ENCODE measurements at regions of chr13 and their contacts with region 1.

Region 1: DNA sequence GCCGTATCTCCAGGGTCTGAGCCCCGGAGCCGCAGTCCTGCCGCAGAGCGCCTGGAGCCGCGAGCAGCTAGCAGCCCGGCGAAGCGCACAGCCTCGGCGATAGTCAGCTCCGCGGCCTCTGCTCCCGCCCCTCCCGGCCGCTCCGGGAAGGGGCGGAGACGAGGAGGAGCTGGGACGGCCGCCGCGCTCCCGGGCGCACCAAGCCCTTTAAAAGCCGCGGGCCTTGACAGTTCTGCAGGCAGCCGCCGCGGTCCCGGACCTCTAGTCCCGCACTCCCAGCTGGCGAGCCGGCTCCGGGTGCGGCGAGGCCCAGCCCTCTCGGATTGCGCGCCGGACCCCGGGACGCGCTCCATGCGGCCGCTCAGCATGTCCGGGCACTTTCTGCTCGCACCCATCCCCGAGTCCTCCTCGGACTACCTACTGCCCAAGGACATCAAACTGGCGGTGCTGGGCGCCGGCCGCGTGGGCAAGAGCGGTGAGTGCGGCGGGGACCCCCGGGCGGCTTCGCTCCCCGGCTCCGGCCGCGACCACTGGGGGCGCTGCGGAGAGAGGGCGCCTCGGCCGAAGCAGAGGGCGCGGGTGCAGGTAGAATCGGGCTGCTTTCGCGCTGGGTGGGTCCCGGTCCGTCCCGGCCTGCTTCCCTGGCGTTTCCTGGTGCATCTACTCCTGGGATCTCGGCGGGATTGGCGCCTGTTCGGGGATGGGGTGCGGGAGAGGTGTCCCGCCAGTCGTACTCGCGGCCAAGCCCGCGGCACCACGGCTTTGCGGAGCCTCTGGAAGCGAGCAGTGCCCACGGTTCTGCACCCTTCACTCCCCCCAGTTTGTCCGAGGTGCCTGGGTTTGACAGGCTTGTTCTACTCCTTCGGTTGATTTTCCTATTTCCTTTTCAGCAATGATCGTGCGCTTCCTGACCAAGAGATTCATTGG is at the start of gene RASL11A:
- DNase-seq: peak; percentile 87
- H3K4me3 ChIP-seq: peak within 1 kb of the TSS; percentile 36 to 71 (median 67)
- H3K27ac ChIP-seq: peak within 1 kb of the TSS; percentile 12
- H3K4me1 ChIP-seq: peaks cover 16% of the 10 kb centered on the region
- H3K27me3 ChIP-seq: peaks cover 17 to 18% of the 10 kb centered on the region in 2 experiments
- CTCF ChIP-seq: peak; percentile 84 to 91
- POLR2A ChIP-seq: peak; percentile 75
- total RNA-seq, gene RASL11A: 1.3 and 2.1 TPM in 2 replicates

Region 2: GRCh38 chr13:27171827-27172494 is 98.9 kb before region 1 on chr13:
- CTCF ChIA-PET with region 1: interaction called, 6 read pairs
- POLR2A ChIA-PET with region 1: no interaction called
- dilution Hi-C with region 1: no loop called
- intact Hi-C with region 1: loop called (anchors 1 kb)
- DNase-seq: peak; percentile 92
- H3K4me3 ChIP-seq: peak overlapping the region; percentile 74 to 86 (median 80)
- H3K27ac ChIP-seq: peak overlapping the region; percentile 88
- H3K4me1 ChIP-seq: peaks cover 38% of the 10 kb centered on the region
- H3K27me3 ChIP-seq: no peaks in the 10 kb centered on the region
- CTCF ChIP-seq: no peak
- POLR2A ChIP-seq: no peak

Region 3: DNA sequence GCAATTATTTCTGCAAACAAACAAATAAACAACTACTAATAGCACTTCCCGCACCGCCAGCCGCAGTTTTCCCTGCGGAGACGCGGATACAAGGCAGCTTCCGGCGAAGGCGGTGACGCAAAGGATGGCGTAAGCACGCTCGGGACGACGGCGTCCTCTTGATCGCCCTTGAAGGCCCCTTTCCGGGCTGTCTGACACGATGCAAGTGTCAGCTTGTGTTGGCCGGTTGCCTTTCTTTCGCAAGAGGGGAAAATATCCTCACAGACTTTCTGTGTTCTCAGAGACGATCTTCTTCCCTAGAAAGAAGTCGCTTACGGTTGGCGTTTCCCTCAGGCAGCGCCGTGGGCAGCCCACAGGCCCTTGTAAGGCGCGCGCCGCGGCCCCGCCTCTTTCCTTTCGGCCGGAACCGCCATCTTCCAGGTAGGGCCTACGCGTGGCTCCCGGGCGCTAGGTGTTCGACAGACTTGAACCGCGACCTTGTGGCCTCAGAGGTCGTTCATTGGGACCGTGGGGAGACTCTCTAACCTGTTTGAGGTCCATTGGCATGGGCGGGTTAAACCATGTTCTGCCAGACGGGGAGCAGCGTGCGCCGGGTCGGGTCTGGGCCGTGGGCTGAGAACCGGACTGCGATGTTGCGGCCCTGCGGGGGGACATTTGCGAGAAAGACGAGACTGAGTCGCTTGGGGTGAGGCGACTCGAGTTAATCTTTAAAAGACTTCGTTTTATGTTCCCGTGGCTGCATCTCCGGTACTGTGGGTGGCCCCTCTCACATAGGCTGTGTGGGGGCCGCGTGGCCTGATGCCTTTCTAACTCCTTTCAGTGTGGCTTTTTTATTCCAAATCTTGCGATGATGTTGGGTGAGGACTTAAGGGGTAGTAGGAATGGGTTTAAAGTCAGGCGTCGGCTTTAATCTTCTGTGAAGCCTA is 19.4 kb before region 1 on chr13 and contains the start of gene RPL21:
- CTCF ChIA-PET with region 1: interaction called, 7 read pairs
- POLR2A ChIA-PET with region 1: interaction called, 3 read pairs
- dilution Hi-C with region 1: no loop called
- intact Hi-C with region 1: loop called (anchors 1 kb)
- DNase-seq: peak; percentile 98
- H3K4me3 ChIP-seq: peak within 1 kb of the TSS; percentile 70 to 100 (median 96)
- H3K27ac ChIP-seq: peak within 1 kb of the TSS; percentile 94
- H3K4me1 ChIP-seq: peaks cover 19% of the 10 kb centered on the region
- H3K27me3 ChIP-seq: no peaks in the 10 kb centered on the region
- CTCF ChIP-seq: no peak
- POLR2A ChIP-seq: peak; percentile 92
- total RNA-seq, gene RPL21: 871 and 890 TPM in 2 replicates

Region 4: DNA sequence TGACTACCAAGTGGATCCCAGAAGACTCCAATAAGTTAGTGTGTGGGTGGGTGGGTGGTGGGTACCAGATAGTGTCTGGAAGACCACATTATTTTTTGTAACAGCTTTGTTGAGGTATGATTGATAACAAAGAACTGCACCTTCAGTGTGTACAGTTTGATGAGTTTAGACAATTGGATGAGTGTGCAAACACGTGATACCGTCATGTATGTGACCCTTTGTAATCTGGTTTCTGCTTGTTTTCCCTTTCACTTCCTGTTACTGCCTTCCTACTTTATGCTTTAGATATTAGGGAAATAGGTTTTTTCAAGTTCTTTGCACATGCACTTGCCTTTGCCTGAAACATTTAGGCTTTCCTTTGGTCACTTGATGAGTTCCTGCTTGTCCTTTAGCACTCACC is 11.0 kb before region 1 on chr13:
- CTCF ChIA-PET with region 1: interaction called, 11 read pairs
- POLR2A ChIA-PET with region 1: interaction called, 3 read pairs
- dilution Hi-C with region 1: no loop called
- intact Hi-C with region 1: no loop called
- DNase-seq: peak; percentile 68
- H3K4me3 ChIP-seq: no peak overlapping the region
- H3K27ac ChIP-seq: peak overlapping the region; percentile 35
- H3K4me1 ChIP-seq: peaks cover 12% of the 10 kb centered on the region
- H3K27me3 ChIP-seq: no peaks in the 10 kb centered on the region
- CTCF ChIP-seq: no peak
- POLR2A ChIP-seq: peak; percentile 15

Region 5: DNA sequence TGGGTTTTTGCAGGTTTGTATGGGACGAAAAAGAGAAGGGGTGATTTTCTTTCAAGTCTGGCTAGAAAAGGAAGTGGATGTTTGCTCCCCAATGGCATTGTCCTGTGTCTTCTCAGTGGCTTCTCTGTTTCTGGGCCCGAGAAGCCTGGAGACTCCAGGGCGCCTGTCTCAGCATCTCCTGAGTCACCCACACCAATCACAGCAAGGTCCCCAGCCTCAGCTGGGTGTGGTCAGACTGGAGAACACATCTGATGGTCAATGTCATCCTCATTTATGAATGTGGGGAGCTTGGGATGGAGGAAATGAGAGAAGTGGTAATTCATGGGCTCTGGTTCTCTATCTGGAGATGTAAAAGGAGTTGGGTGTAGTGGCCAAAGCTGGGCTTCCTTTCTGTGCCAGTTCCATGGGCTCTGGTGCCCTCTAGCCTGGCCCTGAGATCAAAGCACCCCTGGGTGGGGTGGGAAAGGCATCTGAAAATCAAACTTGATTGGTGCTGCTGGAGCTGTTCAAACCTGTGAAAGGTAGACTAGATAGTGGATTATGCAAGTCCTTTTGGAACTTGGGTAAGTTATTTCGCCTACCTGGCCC is 13.1 kb after region 1 on chr13:
- CTCF ChIA-PET with region 1: interaction called, 17 read pairs
- POLR2A ChIA-PET with region 1: interaction called, 3 read pairs
- dilution Hi-C with region 1: no loop called
- intact Hi-C with region 1: no loop called
- DNase-seq: peak; percentile 26
- H3K4me3 ChIP-seq: no peak overlapping the region
- H3K27ac ChIP-seq: no peak overlapping the region
- H3K4me1 ChIP-seq: no peaks in the 10 kb centered on the region
- H3K27me3 ChIP-seq: peaks cover 2 to 3% of the 10 kb centered on the region in 2 experiments
- CTCF ChIP-seq: peak; percentile 39 to 43
- POLR2A ChIP-seq: no peak

Region 6: GRCh38 chr13:27449936-27450828 is 179.3 kb after region 1 on chr13 and contains the start of gene MTIF3:
- CTCF ChIA-PET with region 1: no interaction called
- POLR2A ChIA-PET with region 1: no interaction called
- dilution Hi-C with region 1: no loop called
- intact Hi-C with region 1: loop called (anchors 2 kb)
- DNase-seq: peak; percentile 92
- H3K4me3 ChIP-seq: peak within 1 kb of the TSS; percentile 68 to 90 (median 82)
- H3K27ac ChIP-seq: peak within 1 kb of the TSS; percentile 55
- H3K4me1 ChIP-seq: peaks cover 21% of the 10 kb centered on the region
- H3K27me3 ChIP-seq: peaks cover 7 to 20% of the 10 kb centered on the region in 2 experiments
- CTCF ChIP-seq: no peak
- POLR2A ChIP-seq: peak; percentile 77
- total RNA-seq, gene MTIF3: 23.5 and 36.1 TPM in 2 replicates

Region 7: DNA sequence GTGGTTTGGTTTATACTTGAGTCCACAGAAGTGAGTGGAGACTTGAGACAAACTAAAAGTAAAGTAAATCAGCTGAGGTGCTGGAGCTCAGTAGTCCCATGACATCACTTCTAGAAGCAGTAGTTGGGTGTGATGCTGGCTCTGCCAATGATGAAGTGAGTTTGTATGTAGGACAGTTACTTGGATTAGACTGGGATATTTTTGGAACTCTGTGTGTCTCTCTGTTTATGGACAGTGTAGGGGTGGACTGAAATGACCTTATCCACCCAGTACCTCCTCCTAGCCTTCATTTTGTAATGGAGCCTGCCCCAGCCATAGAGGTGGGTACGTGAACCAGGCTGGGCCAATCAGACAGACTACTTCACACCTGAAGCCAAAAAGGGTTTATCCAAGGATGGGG is 403.1 kb after region 1 on chr13:
- CTCF ChIA-PET with region 1: no interaction called
- POLR2A ChIA-PET with region 1: no interaction called
- dilution Hi-C with region 1: no loop called
- intact Hi-C with region 1: no loop called
- DNase-seq: no peak
- H3K4me3 ChIP-seq: no peak overlapping the region
- H3K27ac ChIP-seq: no peak overlapping the region
- H3K4me1 ChIP-seq: no peaks in the 10 kb centered on the region
- H3K27me3 ChIP-seq: peaks cover 0 to 2% of the 10 kb centered on the region in 2 experiments
- CTCF ChIP-seq: no peak
- POLR2A ChIP-seq: no peak